K562 (cell line): ENCODE measurements at regions of chr21 and their contacts with region 1.

Region 1: DNA sequence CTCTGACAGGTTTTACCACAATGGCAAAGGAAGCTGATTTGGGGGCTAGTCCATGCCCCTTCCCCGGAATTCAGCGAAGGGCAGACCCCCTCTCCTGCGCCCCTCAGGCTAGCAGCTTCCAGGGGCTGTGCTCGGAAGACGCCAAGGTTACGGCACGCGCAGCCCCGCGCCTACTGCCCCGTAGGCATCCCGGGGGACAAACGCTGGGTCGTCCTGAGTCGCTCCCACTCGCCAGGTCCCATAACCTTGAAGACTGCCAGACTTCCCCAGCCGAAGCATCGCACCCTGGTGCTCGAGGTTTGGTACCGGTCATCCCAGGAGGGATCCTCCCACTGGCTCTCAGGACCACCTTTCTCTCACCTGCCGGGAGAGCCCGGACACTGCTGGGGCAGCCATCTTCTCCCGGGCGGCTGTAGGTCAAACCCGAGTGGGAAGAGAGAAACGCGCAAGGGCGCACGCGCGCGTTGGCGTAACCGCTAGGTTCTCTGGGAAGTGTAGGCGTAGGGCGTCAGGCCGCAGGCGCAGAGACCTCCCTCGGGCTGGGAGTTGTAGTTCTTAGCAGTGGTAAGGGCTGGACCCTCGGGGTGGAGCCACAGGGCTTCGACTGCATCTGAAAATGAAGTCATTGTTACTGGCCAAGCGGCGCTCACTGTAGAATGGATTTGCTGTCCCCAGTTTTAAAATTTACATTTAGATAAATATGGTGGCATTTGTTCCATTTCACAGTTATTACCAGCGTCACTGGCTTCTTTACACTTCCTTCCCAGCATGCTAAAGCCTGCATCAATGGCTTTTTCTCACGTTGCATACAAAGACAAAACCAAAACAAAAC is at the start of gene ATP5PO:
- DNase-seq: peak; percentile 98 to 100 (median 98)
- ATAC-seq: peak; percentile 100
- H3K4me3 ChIP-seq: peak within 1 kb of the TSS; percentile 86
- H3K27ac ChIP-seq: peak within 1 kb of the TSS; percentile 94
- H3K4me1 ChIP-seq: peaks cover 6 to 13% of the 10 kb centered on the region in 2 experiments; a peak in 3 of 5 replicates
- H3K27me3 ChIP-seq: no peaks in the 10 kb centered on the region
- CTCF ChIP-seq: no peak; a peak in 1 of 6 replicates
- EP300 ChIP-seq: no peak
- POLR2A ChIP-seq: peak; percentile 99
- RAD21 ChIP-seq: 0 out of 4 replicates have a peak, but pooled peaks of 1 of the 2 experiments have one; percentile 2
- polyA plus RNA-seq, gene ATP5PO: 2,628 to 2,722 TPM

Region 2: GRCh38 chr21:33619726-33620125 is 295.9 kb before region 1 on chr21:
- CTCF ChIA-PET with region 1: no interaction called
- POLR2A ChIA-PET with region 1: no interaction called
- in situ Hi-C with region 1: no loop called
- intact Hi-C with region 1: no loop called
- DNase-seq: no peak
- ATAC-seq: no peak
- H3K4me3 ChIP-seq: no peak overlapping the region
- H3K27ac ChIP-seq: no peak overlapping the region
- H3K4me1 ChIP-seq: peaks cover 0 to 4% of the 10 kb centered on the region in 2 experiments; a peak in 1 of 5 replicates
- H3K27me3 ChIP-seq: no peaks in the 10 kb centered on the region
- CTCF ChIP-seq: no peak
- EP300 ChIP-seq: no peak
- POLR2A ChIP-seq: no peak
- RAD21 ChIP-seq: no peak

Region 3: DNA sequence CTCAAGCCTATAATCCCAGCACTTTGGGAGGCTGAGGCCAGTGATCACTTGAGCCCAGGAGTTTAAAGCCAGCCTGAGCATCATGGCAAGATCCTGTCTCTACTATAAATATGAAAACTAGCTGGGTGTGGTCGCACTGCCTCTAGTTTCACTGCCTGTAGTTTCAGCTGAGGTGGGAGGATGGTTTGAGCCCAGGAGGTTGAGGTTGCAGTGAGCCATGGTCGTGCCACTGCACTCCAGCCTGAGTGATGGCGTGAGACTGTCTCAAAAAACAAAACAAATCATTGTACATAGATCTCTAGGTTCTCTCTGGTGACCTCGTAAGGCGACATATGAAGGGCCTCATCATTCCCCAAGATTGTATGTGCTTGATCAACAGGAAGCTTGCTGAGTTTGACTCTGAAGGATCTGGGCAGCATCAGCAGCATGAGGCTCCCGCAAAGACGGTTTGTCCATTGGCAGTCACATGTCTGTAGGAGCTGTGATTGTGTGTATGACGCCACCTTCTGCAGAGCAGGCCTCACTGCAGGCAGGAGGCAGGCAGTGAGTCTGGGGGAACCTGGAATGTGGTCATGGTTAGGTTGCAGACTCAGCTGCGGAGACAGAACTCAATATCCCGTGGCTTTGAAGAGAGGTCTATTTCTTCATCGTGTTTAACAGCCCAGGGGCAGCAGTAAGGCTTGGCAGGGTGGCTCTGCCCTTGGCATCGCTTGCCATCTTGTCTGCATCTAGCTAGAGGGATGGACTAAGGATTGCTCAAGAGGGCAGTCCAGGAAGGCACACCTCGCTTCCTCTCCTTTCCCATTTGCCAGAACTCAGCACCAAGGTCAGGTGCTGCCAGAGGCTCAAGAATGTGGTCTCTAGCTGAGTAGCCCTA is 13.9 kb before region 1 on chr21:
- CTCF ChIA-PET with region 1: no interaction called
- POLR2A ChIA-PET with region 1: interaction called, 15 read pairs
- in situ Hi-C with region 1: no loop called
- intact Hi-C with region 1: no loop called
- DNase-seq: peak in 2 of 4 experiments; percentile 44 to 71
- ATAC-seq: peak; percentile 85
- H3K4me3 ChIP-seq: no peak overlapping the region
- H3K27ac ChIP-seq: no peak overlapping the region
- H3K4me1 ChIP-seq: peaks cover 6% of the 10 kb centered on the region in 2 experiments; a peak in 3 of 5 replicates
- H3K27me3 ChIP-seq: no peaks in the 10 kb centered on the region
- CTCF ChIP-seq: peak; percentile 61 to 78 (median 65)
- EP300 ChIP-seq: no peak
- POLR2A ChIP-seq: peak; percentile 50; the same call in 1 of the 2 replicates
- RAD21 ChIP-seq: peak; percentile 57 to 73

Region 4: GRCh38 chr21:34362136-34362444 is 446.5 kb after region 1 on chr21:
- CTCF ChIA-PET with region 1: no interaction called
- POLR2A ChIA-PET with region 1: no interaction called
- in situ Hi-C with region 1: no loop called
- intact Hi-C with region 1: no loop called
- DNase-seq: no peak
- ATAC-seq: peak; percentile 15
- H3K4me3 ChIP-seq: no peak overlapping the region
- H3K27ac ChIP-seq: no peak overlapping the region
- H3K4me1 ChIP-seq: peaks cover 0 to 2% of the 10 kb centered on the region in 2 experiments; a peak in 2 of 5 replicates
- H3K27me3 ChIP-seq: peaks cover 0 to 6% of the 10 kb centered on the region in 2 experiments; a peak in 2 of 5 replicates
- CTCF ChIP-seq: no peak
- EP300 ChIP-seq: no peak
- POLR2A ChIP-seq: no peak
- RAD21 ChIP-seq: no peak